Cardiac septum (tissue), 1 donor: ENCODE measurements at regions of chr3 and their contacts with region 1.

Region 1: GRCh38 chr3:64691051-64691450 is 3.3 kb upstream of the ADAMTS9 start:
- DNase-seq: no peak

Region 2: DNA sequence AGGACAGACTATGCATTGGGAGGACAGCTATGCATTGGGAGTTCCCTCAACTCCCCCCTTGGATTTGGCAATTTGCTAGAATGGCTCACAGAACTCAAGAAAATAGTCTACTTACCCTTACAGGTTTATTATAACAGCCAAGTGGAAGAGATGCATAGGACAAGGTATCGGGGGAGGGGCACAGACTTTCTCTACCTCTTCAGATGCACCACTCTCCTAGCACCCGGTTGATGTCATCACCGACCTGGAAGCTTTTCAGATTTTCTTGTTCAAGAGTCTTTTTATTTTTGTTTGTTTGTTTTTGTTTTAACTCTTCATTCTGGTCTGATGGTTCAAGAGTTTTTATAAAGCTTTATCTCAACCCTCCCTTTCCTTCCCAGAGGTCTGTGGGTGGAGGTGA is 17.4 kb after region 1 on chr3:
- intact Hi-C with region 1: no loop called
- DNase-seq: no peak

Region 3: DNA sequence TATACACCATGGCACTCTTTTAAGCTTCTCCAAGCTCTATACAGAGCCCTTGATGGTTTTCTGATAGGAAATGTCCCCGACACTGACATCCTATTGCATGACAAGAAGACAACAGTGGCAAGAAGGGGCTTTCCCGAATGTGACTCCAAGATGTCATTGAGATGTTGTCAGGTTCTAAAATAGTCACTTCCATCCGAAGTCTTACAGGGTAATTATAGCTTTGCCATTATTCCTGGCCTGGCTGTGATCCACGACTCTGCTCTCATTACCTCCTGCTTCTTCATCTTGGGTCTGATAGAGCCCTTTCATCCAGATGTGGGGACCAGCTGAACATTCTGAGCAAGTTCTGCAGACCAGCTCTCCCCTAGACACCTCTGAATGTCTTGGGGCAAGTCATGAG is 37.4 kb after region 1 on chr3:
- intact Hi-C with region 1: loop called (anchors 2 kb)
- DNase-seq: peak; percentile 76

Region 4: GRCh38 chr3:64908292-64908691 is 217.2 kb after region 1 on chr3:
- intact Hi-C with region 1: loop called (anchors 1 kb)
- DNase-seq: no peak

Region 5: GRCh38 chr3:64954995-64955636 is 264.1 kb after region 1 on chr3:
- intact Hi-C with region 1: no loop called
- DNase-seq: no peak